Activated T-helper 1 cell treated with anti-CD3 and anti-CD28 coated beads, Interleukin-12 subunit alpha, Interleukin-12 subunit beta, Interleukin-2, Interleukin-4 antibody, amounts not matched to agents 30 ng/mL and 10 ng/mL and 1 ng/mL, durations not matched to agents 14 hours and 24 hours and 36 hours (primary cell): ENCODE measurements at regions of chr7 and their contacts with region 1.

Region 1: GRCh38 chr7:114856625-114857024 is 65.3 kb upstream of the MDFIC start:
- DNase-seq: no peak
- H3K4me3 Mint-ChIP-seq: no peak overlapping the region
- H3K27ac Mint-ChIP-seq: no peak overlapping the region
- H3K4me1 Mint-ChIP-seq: no peaks in the 10 kb centered on the region
- H3K27me3 Mint-ChIP-seq: no peaks in the 10 kb centered on the region

Region 2: DNA sequence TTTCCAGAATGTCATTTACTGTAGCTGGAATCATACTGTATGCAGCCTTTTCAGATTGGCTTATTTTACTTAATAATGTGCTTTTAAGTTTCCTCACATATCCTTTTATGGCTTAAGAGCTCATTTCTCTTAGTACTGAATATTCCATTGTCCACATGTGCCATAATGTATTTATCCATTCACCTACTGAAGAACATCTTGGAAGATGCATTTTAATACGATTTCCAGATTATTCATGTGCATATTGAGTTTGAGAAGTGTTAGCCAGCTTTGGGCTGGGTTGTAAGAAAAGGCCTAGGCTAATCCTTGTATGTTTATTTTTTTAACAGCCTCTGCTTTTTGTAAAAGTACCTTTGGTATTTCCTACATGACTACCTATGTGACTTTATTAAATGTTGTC is 44.1 kb before region 1 on chr7:
- intact Hi-C with region 1: loop called (anchors 1 kb)
- DNase-seq: no peak
- H3K4me3 Mint-ChIP-seq: no peak overlapping the region
- H3K27ac Mint-ChIP-seq: no peak overlapping the region
- H3K4me1 Mint-ChIP-seq: peaks cover 26% of the 10 kb centered on the region
- H3K27me3 Mint-ChIP-seq: peaks cover 3% of the 10 kb centered on the region